Mucosa of descending colon (tissue), 3 donors: ENCODE measurements at regions of chr3 and their contacts with region 1.

Region 1: GRCh38 chr3:14467814-14468620 is 65.6 kb downstream of the SLC6A6 start:
- DNase-seq: peak in 1 of 3 donors; percentile 53
- ATAC-seq: peak; percentile 78
- H3K4me3 ChIP-seq: no peak overlapping the region
- H3K4me1 ChIP-seq: no peaks in the 10 kb centered on the region
- CTCF ChIP-seq: peak; percentile 74

Region 2: DNA sequence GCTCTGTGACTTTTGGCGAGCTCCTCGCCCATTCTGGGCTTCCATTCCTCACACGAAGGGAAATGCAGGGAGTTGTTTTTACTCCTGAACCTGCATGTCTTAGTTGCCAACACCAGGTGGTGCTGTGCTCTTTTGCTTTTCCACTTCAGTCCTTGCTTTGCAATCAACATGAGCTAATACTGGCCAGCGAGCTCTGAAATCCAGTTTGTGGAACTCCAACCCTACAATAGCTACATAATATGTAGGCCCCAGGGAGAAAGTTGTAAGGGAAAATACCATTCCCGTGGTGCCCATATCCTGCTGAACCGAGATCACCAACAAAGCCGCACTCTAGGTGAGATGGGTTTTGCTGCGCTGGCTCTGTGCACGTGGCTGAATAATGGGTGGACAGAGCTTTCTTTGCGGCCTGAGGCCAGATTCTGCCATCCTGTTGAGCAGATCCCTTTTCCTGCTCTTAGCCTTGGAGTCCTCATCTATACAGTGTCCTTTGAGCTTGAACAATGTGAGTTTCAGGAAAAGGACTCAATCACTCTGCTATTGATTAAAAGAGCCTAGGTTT is 264.4 kb before region 1 on chr3:
- intact Hi-C with region 1: loop called (anchors 2 to 5 kb)
- DNase-seq: peak in 2 of 3 donors; percentile 47 to 68
- ATAC-seq: peak; percentile 87
- H3K4me3 ChIP-seq: no peak overlapping the region
- H3K4me1 ChIP-seq: peaks cover 8% of the 10 kb centered on the region
- CTCF ChIP-seq: peak; percentile 80

Region 3: GRCh38 chr3:14261229-14261628 is 206.8 kb before region 1 on chr3:
- intact Hi-C with region 1: loop called (anchors 5 kb)
- DNase-seq: peak; percentile 80 to 91 (median 89)
- ATAC-seq: peak; percentile 79
- H3K4me3 ChIP-seq: no peak overlapping the region
- H3K4me1 ChIP-seq: peaks cover 8% of the 10 kb centered on the region
- CTCF ChIP-seq: peak; percentile 97

Region 4: GRCh38 chr3:14497321-14497720 is 29.3 kb after region 1 on chr3:
- intact Hi-C with region 1: no loop called
- DNase-seq: peak in 1 of 3 donors; percentile 11
- ATAC-seq: no peak
- H3K4me3 ChIP-seq: no peak overlapping the region
- H3K4me1 ChIP-seq: no peaks in the 10 kb centered on the region
- CTCF ChIP-seq: no peak

Region 5: DNA sequence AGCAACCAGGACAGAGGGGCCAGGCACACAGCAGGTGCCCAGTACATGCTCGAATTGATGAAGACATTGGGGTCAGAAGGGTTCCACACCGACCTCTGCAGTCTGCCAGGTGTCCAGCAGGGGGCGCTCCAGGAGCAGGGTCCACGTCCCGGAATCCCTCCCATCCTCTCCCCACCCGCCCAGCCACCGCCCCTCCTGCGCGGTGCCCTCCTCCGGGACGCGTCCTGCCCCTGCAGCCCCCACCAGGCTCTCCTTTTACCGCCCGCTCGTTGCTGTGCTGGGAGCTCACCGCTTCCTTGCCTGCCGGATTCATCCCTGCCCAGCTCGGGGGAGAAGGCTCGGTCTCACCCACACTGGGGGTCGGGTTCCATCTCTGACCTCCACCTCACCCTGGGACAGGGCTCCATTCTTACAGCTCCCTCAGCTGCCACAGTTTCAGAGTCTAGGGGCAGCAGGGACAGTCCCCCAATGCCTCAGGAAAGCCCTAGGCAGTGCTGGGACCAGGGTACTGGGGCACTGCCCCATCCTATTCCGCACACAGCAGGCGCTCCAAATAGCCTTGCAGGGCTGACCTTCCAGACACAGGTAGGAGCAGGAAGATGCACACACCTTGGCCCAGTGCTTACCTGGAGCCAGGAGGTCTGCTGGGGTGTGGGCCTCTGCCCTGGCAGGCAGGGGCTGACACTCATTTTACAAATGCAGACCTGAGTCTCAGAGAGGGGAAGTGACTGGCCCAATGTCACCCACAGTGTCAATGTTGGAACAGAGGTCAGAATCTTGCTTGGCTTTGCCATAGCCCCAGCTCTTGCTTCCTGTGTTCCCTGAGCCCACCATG is 41.2 kb after region 1 on chr3:
- intact Hi-C with region 1: no loop called
- DNase-seq: peak; percentile 64 to 77 (median 76)
- ATAC-seq: peak; percentile 78
- H3K4me3 ChIP-seq: no peak overlapping the region
- H3K4me1 ChIP-seq: no peaks in the 10 kb centered on the region
- CTCF ChIP-seq: peak; percentile 96